Activated CD8-positive, alpha-beta T cell treated with anti-CD3 and anti-CD28 coated beads, Interleukin-2, amount 10 ng/mL, durations not matched to agents 7 days and 5 days (primary cell): ENCODE measurements at regions of chr1 and their contacts with region 1.

Region 1: DNA sequence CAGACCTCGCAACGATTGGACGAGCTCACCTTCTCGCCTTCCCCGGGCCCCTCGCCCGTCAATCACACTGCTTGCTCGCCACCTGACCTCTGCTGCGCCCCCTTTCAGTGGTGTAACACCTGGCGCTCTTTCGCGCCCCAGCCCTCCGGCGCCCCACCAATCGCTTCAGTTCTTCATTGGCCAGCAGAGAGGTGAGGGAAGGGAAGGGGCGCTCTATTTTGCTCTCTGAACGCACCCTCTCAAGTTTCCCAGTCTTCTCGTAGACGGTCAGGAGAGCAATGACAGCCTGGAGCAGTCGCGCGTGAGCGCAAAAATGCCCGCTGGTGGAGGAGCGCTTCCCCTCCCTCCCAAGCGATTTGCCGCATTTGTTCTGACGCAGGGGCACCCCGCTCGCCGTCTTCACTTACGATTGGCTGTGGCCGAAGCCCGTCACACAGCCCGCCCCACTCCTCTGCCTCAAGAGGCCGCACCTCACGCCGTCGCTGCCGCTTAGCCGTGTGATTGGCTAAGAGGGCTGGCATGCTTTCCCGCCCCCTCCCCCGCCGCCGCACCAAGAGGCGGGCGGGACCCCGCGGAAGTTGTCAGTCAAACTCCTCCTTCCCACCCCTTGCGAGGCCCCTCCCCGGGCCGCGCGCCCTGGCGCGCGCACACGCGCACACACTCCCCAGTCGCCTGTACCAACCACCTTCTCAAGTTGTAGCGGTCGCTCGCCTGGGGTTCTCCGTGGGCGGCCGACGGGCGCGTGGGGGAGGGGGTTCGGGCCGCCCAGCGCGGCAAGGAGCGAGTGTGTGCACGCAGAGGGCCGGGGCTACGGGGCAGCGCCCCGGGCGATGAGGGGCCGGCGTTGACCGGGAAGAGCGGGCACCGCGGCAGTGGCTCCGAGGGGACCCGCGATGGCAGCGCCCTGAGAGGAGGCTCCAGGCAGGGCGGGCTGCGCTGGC is at the start of gene PPP2R5A:
- DNase-seq: peak; percentile 99
- ATAC-seq: peak; percentile 94
- H3K4me3 Mint-ChIP-seq: peak within 1 kb of the TSS; percentile 99
- H3K27ac Mint-ChIP-seq: peak within 1 kb of the TSS; percentile 99
- H3K4me1 Mint-ChIP-seq: peaks cover 37% of the 10 kb centered on the region
- H3K27me3 Mint-ChIP-seq: no peaks in the 10 kb centered on the region
- total RNA-seq, gene PPP2R5A: 66.7 to 72.3 TPM

Region 2: DNA sequence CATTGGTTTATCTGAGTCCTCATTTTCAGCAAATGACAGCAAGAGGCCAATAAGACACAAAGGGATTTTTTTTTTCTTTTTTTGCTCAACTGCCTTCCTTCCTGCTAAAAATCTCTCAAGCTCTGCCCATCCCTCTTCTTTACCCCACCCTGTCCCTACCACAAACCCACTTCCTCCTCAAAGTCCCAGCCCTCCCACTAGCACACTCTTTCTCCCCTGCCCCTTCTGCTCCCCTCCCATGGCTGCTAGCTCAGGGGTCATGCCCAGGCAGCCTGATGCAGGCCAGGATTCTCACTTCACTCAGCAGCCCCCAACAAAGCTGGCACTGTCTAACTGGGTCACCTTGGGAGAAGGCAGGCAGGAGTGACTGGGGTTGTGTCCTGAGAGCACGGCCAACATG is 28.6 kb before region 1 on chr1:
- CTCF ChIA-PET with region 1: interaction called, 15 read pairs
- POLR2A ChIA-PET with region 1: interaction called, 24 read pairs
- DNase-seq: peak; percentile 83
- ATAC-seq: peak; percentile 70
- H3K4me3 Mint-ChIP-seq: peak overlapping the region; percentile 40
- H3K27ac Mint-ChIP-seq: peak overlapping the region; percentile 87
- H3K4me1 Mint-ChIP-seq: peaks cover 74% of the 10 kb centered on the region
- H3K27me3 Mint-ChIP-seq: peaks cover 2% of the 10 kb centered on the region

Region 3: GRCh38 chr1:212269306-212269705 is 15.7 kb before region 1 on chr1:
- CTCF ChIA-PET with region 1: interaction called, 5 read pairs
- POLR2A ChIA-PET with region 1: interaction called, 11 read pairs
- DNase-seq: no peak
- ATAC-seq: no peak
- H3K4me3 Mint-ChIP-seq: no peak overlapping the region
- H3K27ac Mint-ChIP-seq: no peak overlapping the region
- H3K4me1 Mint-ChIP-seq: peaks cover 6% of the 10 kb centered on the region
- H3K27me3 Mint-ChIP-seq: peaks cover 23% of the 10 kb centered on the region